Common myeloid progenitor, CD34-positive (primary cell): ENCODE measurements at regions of chr4 and their contacts with region 1.

Region 1: DNA sequence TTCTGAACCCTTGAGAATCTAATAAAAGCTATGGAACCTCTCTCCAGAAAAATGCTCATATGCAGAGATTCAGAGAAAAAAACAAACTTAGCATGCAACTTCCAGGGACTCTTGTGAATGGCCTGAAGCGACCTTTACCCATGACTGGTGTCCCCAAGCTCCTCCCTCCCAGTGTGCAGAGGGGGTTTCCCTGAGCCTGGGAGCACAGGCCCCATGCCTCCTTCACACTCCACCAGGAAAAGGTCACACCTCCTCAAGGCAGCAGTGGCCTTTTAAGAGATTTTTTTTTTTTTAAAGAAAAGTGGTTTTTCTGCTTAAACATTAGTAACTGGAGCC is 13.3 kb upstream of the UBA6 start:
- DNase-seq: peak in 2 of 3 donors; percentile 25 to 37
- H3K4me3 ChIP-seq: no peak overlapping the region
- H3K27ac ChIP-seq: peak overlapping the region in 1 of 2 experiments; percentile 46
- H3K4me1 ChIP-seq: peaks cover 0 to 9% (median 6%) of the 10 kb centered on the region in 4 experiments
- H3K27me3 ChIP-seq: no peaks in the 10 kb centered on the region

Region 2: GRCh38 chr4:67700738-67701516 is 13.3 kb before region 1 on chr4 and contains the start of gene UBA6:
- CTCF ChIA-PET with region 1: interaction called, 11 read pairs
- POLR2A ChIA-PET with region 1: no interaction called
- DNase-seq: peak; percentile 96 to 98 (median 98)
- H3K4me3 ChIP-seq: peak within 1 kb of the TSS; percentile 75 to 93 (median 89)
- H3K27ac ChIP-seq: peak within 1 kb of the TSS; percentile 89 to 97
- H3K4me1 ChIP-seq: peaks cover 9 to 22% (median 16%) of the 10 kb centered on the region in 4 experiments
- H3K27me3 ChIP-seq: no peaks in the 10 kb centered on the region

Region 3: DNA sequence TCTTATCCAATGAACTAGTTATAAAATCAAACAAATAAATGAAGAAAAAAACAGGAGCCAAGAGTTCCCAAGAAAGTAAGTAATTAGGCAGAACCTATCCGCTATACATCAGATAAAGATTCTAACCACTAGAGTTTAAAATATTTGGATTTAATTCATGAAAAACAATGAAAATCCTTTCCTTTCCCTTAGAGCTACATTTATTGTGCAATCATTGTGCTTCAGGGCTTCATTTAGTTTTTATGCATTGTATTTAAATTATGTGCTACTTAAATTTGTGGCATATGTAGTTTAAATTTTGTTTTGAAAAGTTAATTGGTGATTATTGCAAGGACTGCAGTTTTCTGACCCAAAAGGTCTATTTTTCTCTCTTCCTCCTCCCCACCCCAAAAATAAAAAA is 22.0 kb after region 1 on chr4:
- CTCF ChIA-PET with region 1: no interaction called
- POLR2A ChIA-PET with region 1: no interaction called
- DNase-seq: no peak
- H3K4me3 ChIP-seq: no peak overlapping the region
- H3K27ac ChIP-seq: no peak overlapping the region
- H3K4me1 ChIP-seq: no peaks in the 10 kb centered on the region
- H3K27me3 ChIP-seq: no peaks in the 10 kb centered on the region